ENCODE measurements at regions of chr11 and their contacts with region 1.

Region 1: DNA sequence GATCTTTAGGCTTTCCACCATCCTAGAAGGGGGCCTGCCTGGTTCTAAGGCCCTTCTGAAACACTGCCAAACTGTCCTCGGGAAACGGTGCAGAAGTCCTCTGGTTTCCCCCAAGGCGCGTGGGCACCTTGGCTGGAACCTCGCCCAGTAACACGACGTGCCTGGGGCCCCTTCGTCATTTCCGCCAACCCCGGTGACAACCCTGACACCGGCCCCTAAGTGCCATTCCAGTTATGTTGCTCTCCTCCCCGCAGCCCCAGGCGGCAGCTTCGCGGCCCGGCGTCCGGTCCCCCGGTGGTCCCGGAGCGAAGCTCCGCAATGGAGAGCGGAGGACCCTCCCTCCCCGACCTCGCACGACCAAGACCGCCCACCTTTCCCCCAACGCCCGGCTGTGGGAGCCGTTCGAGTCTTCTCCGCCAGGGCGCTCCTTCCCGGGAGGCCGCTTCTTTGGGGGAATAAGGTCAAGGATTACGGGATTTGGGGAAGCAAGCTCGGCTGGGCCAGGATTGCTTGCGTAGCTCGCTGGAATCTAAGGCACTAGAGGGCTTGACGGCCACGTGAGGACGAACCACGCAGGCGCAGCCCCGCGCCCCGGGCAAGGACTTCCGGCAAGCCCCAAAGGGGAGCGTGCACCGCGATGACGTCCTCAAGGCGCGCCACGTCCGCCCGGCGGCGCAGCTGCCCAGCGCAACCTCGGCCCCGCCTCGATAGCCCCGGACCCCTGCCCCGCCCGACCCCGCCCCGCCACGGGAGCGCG is 626 bp downstream of the RNH1 start:
- DNase-seq: peak; percentile 95 to 98 (median 97)
- ATAC-seq: peak; percentile 79
- H3K4me3 ChIP-seq: peak overlapping the region; percentile 99
- H3K4me3 Mint-ChIP-seq: peak overlapping the region; percentile 93 to 99 (median 96)
- H3K27ac ChIP-seq: peak overlapping the region; percentile 99
- H3K27ac Mint-ChIP-seq: peak overlapping the region; percentile 98 to 100 (median 99)
- H3K4me1 ChIP-seq: peaks cover 12 to 26% of the 10 kb centered on the region in 2 donors
- H3K4me1 Mint-ChIP-seq: peaks cover 5 to 34% (median 21%) of the 10 kb centered on the region in 7 donors
- H3K27me3 ChIP-seq: no peaks in the 10 kb centered on the region
- H3K27me3 Mint-ChIP-seq: no peaks in the 10 kb centered on the region

Region 2: GRCh38 chr11:199782-200181 is 306.6 kb before region 1 on chr11:
- CTCF ChIA-PET with region 1: no interaction called
- POLR2A ChIA-PET with region 1: no interaction called
- intact Hi-C with region 1: no loop called
- DNase-seq: peak in 2 of 9 donors; percentile 7 to 19
- ATAC-seq: no peak
- H3K4me3 ChIP-seq: no peak overlapping the region
- H3K4me3 Mint-ChIP-seq: no peak overlapping the region
- H3K27ac ChIP-seq: no peak overlapping the region
- H3K27ac Mint-ChIP-seq: peak overlapping the region in 1 of 9 donors; percentile 25
- H3K4me1 ChIP-seq: peaks cover 9 to 34% of the 10 kb centered on the region in 2 donors
- H3K4me1 Mint-ChIP-seq: peaks cover 26 to 42% (median 38%) of the 10 kb centered on the region in 7 donors
- H3K27me3 ChIP-seq: no peaks in the 10 kb centered on the region
- H3K27me3 Mint-ChIP-seq: no peaks in the 10 kb centered on the region

Region 3: GRCh38 chr11:236774-237767 is 269.3 kb before region 1 on chr11 and contains the start of gene PSMD13:
- CTCF ChIA-PET with region 1: no interaction called
- POLR2A ChIA-PET with region 1: interaction called, 3 read pairs
- intact Hi-C with region 1: loop called (anchors 1 kb)
- DNase-seq: peak; percentile 82 to 92 (median 88)
- ATAC-seq: peak; percentile 88
- H3K4me3 ChIP-seq: peak within 1 kb of the TSS; percentile 100
- H3K4me3 Mint-ChIP-seq: peak within 1 kb of the TSS; percentile 84 to 99 (median 96)
- H3K27ac ChIP-seq: peak within 1 kb of the TSS; percentile 97
- H3K27ac Mint-ChIP-seq: peak within 1 kb of the TSS; percentile 84 to 100 (median 100)
- H3K4me1 ChIP-seq: peaks cover 17 to 23% of the 10 kb centered on the region in 2 donors
- H3K4me1 Mint-ChIP-seq: peaks cover 26 to 66% (median 53%) of the 10 kb centered on the region in 7 donors
- H3K27me3 ChIP-seq: no peaks in the 10 kb centered on the region
- H3K27me3 Mint-ChIP-seq: no peaks in the 10 kb centered on the region
- total RNA-seq, gene PSMD13: 64.3 to 172 (median 86.9) TPM

Region 4: GRCh38 chr11:355581-356458 is 150.6 kb before region 1 on chr11:
- CTCF ChIA-PET with region 1: no interaction called
- POLR2A ChIA-PET with region 1: no interaction called
- intact Hi-C with region 1: loop called in 1 of 2 experiments (anchors 5 kb)
- DNase-seq: peak; percentile 74 to 92 (median 90)
- ATAC-seq: peak; percentile 89
- H3K4me3 ChIP-seq: peak overlapping the region; percentile 66
- H3K4me3 Mint-ChIP-seq: peak overlapping the region in 8 of 10 donors; percentile 83 to 93 (median 88)
- H3K27ac ChIP-seq: peak overlapping the region; percentile 97
- H3K27ac Mint-ChIP-seq: peak overlapping the region in 6 of 9 donors; percentile 89 to 99 (median 98)
- H3K4me1 ChIP-seq: peaks cover 9 to 19% of the 10 kb centered on the region in 2 donors
- H3K4me1 Mint-ChIP-seq: peaks cover 29 to 45% (median 37%) of the 10 kb centered on the region in 7 donors
- H3K27me3 ChIP-seq: no peaks in the 10 kb centered on the region
- H3K27me3 Mint-ChIP-seq: peaks cover 0 to 6% (median 0%) of the 10 kb centered on the region in 5 donors

Region 5: GRCh38 chr11:488999-489398 is 17.4 kb before region 1 on chr11:
- CTCF ChIA-PET with region 1: no interaction called
- POLR2A ChIA-PET with region 1: no interaction called
- intact Hi-C with region 1: no loop called
- DNase-seq: no peak
- ATAC-seq: no peak
- H3K4me3 ChIP-seq: no peak overlapping the region
- H3K4me3 Mint-ChIP-seq: no peak overlapping the region
- H3K27ac ChIP-seq: no peak overlapping the region
- H3K27ac Mint-ChIP-seq: no peak overlapping the region
- H3K4me1 ChIP-seq: no peaks in the 10 kb centered on the region
- H3K4me1 Mint-ChIP-seq: no peaks in the 10 kb centered on the region
- H3K27me3 ChIP-seq: no peaks in the 10 kb centered on the region
- H3K27me3 Mint-ChIP-seq: no peaks in the 10 kb centered on the region

Region 6: DNA sequence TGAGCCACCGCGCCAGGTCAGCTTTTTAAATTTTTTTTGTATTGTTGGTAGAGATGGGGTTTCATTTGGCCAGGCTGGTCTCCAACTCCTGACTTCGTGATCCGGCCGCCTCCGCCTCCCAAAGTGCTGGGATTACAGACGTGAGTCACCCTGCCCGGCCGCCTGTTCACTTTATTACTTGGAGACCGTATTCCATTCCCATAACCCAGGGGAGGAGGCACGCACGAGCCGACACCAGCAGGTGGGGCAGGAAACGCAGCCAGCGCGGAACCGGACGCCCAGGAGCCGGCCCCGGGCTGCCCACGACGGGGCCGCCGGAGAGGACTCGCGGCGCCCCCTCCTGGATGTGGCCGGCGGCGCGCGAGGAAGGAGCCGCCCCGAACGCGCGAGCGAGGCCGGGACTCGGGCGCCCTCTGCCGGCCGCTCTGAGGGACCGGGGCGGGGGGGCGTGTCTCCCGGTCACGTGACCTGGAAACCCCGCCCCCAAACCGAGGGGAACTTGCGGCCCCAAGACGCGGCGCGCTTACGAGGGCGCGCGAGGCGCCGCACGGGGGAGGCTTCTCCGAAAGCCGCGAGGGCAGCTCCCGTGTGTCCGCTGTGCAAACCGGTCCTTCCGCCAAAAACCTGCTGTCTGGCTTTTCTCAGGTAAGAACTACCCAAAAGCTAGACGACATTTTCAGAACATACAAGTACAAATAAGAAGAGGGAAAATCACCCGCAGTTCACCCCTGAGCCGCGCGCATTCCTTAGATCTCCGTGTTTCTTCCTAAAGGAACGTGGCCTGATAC is 12.2 kb after region 1 on chr11:
- CTCF ChIA-PET with region 1: interaction called, 7 read pairs
- POLR2A ChIA-PET with region 1: interaction called, 6 read pairs
- intact Hi-C with region 1: loop called (anchors 1 kb)
- DNase-seq: peak; percentile 69 to 94 (median 87)
- ATAC-seq: peak; percentile 99
- H3K4me3 ChIP-seq: peak overlapping the region; percentile 28
- H3K4me3 Mint-ChIP-seq: peak overlapping the region; percentile 81 to 91 (median 87)
- H3K27ac ChIP-seq: peak overlapping the region; percentile 58
- H3K27ac Mint-ChIP-seq: peak overlapping the region; percentile 70 to 92 (median 85)
- H3K4me1 ChIP-seq: peaks cover 4% of the 10 kb centered on the region in 2 donors
- H3K4me1 Mint-ChIP-seq: peaks cover 2 to 8% (median 4%) of the 10 kb centered on the region in 7 donors
- H3K27me3 ChIP-seq: no peaks in the 10 kb centered on the region
- H3K27me3 Mint-ChIP-seq: no peaks in the 10 kb centered on the region

Region 7: DNA sequence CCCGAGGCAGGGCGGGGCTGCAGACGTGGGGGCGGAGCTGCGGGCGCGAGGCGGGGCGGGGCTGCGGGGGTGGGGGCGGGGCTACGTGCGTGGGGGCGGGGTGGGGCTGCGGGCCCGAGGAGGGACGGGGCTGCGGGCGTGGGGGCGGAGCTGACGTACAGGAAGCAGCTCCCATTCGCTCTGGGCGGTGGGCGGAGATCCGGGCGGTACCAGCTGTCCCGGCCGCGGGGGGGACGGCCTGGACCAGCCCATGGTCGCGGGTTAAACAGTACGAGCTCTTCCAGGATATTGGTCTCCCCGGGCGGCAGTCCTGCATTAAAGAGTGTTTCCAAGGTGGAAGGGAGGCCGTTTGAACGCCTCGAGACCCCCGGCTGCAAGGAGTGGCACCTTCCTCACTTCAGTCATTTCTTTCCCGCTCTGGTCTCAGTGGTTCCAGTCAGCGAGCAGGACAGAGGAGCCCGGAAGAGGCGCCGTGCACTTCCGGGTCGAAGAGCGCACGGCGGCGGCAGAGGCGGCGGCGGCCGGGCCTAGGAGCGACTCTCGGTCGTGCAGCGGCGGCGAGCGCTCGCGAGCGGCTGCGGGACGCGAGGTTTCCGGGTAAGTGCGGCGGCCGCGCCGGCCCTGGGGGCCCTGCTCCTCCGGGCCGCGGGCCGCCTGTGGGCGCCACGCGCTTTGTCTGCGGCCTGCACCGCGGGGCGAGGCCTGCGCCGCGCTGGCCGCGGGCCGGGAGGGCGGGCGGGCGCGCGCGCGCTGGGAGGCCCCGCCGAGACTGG is 69.8 kb after region 1 on chr11 and contains the start of gene PHRF1:
- CTCF ChIA-PET with region 1: no interaction called
- POLR2A ChIA-PET with region 1: interaction called, 6 read pairs
- intact Hi-C with region 1: loop called (anchors 1 kb)
- DNase-seq: peak; percentile 93 to 99 (median 97)
- ATAC-seq: peak; percentile 93
- H3K4me3 ChIP-seq: peak within 1 kb of the TSS; percentile 98
- H3K4me3 Mint-ChIP-seq: peak within 1 kb of the TSS; percentile 93 to 99 (median 98)
- H3K27ac ChIP-seq: peak within 1 kb of the TSS; percentile 98
- H3K27ac Mint-ChIP-seq: peak within 1 kb of the TSS; percentile 96 to 100 (median 99)
- H3K4me1 ChIP-seq: peaks cover 26 to 44% of the 10 kb centered on the region in 2 donors
- H3K4me1 Mint-ChIP-seq: peaks cover 42 to 60% (median 46%) of the 10 kb centered on the region in 7 donors
- H3K27me3 ChIP-seq: no peaks in the 10 kb centered on the region
- H3K27me3 Mint-ChIP-seq: peaks cover 0 to 9% (median 0%) of the 10 kb centered on the region in 5 donors
- total RNA-seq, gene PHRF1: 47.3 to 55.2 (median 49.4) TPM

Region 8: DNA sequence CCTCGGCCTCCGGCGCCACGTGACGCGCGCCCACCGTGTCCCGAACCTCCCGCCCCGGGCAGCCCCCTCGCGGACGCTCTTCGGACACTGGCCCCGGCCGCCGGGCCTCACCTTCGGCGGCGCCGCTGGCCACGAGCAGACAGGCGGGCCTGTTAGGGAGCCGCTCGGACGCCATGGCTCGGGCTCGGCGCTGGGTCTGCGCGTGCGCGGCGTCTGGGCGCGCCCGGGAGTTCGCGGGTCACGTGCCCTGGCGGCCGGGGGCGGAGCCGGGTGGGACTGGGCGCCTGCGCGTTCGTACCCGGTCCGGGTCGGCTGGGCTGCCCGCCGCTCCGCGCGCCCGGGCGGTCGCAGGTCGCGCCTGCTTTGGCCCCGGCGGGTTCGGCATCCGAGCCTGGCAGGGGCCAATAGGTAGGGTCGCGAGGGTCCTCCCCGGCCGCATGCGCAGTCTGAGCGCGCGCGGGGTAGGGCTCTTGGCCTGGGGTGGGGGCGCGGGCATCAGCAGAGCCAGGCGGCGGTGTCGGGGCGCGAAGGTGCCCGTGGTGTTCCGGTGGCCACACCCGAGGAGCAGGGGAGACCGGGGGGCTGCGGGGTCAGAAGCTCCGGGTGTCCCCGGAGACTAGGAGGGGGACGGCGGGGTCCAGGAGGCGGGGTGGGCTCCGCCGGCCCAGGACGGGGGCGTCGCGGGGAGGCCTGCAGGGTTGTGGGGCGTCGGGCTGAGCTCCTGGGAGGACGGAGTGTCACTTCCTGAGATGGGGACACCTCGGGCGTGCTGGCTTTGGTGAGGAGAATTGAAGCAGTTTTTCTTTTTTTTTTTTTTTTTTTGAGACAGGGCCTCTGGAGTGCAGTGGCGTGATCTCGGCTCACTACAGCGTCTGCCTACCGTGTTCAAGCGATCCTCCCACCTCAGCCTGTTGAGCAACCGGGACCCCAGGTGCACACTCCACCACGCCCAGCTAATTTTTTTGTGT is 271.2 kb after region 1 on chr11 and contains the start of gene GATD1:
- CTCF ChIA-PET with region 1: no interaction called
- POLR2A ChIA-PET with region 1: no interaction called
- intact Hi-C with region 1: no loop called
- DNase-seq: peak; percentile 86 to 99 (median 93)
- ATAC-seq: peak; percentile 93
- H3K4me3 ChIP-seq: peak within 1 kb of the TSS; percentile 59
- H3K4me3 Mint-ChIP-seq: peak within 1 kb of the TSS; percentile 72 to 91 (median 83)
- H3K27ac ChIP-seq: peak within 1 kb of the TSS; percentile 85
- H3K27ac Mint-ChIP-seq: peak within 1 kb of the TSS; percentile 40 to 92 (median 78)
- H3K4me1 ChIP-seq: peaks cover 12 to 14% of the 10 kb centered on the region in 2 donors
- H3K4me1 Mint-ChIP-seq: peaks cover 7 to 29% (median 23%) of the 10 kb centered on the region in 7 donors
- H3K27me3 ChIP-seq: no peaks in the 10 kb centered on the region
- H3K27me3 Mint-ChIP-seq: no peaks in the 10 kb centered on the region
- total RNA-seq, gene GATD1: 37.8 to 59.2 (median 52.9) TPM

Region 9: DNA sequence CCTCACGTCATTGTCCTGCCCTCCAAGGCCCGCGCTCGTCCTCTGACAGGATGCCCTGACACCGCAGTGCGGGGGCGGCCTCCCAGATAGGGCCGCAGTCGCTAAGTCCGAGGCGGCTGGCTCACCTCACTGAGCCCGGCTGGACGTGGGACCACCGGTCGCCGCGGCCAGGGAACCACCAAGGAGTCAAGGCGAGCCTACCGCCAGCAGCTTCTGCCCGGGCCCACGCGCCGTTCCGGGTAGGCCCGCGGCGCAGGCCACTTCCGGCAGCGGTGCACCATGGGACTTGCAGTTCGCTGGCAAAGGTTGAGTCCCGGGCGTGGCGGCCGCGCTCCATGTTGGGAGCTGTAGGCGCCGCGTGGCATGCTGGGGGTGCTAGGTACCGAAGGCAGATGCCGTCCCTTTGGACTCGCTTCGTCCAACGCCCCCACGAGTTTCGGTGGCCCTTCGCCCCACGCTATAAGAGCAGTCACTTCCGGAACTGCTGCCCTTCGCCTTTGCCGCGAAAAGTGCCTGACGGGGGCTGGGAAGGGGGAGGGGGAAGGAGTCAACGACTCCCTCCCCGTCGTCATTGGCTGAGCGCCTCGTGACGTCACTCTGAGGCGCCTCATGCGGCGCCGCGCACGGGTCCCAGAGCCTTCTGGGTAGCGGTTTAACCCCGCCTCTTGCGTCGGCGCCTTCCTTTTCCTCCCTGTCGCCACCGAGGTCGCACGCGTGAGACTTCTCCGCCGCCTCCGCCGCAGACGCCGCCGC is 303.0 kb after region 1 on chr11 and contains the start of gene RPLP2:
- CTCF ChIA-PET with region 1: no interaction called
- POLR2A ChIA-PET with region 1: interaction called, 3 read pairs
- intact Hi-C with region 1: loop called in 1 of 2 experiments (anchors 1 kb)
- DNase-seq: peak; percentile 95 to 99 (median 98)
- ATAC-seq: peak; percentile 90
- H3K4me3 ChIP-seq: peak within 1 kb of the TSS; percentile 96
- H3K4me3 Mint-ChIP-seq: peak within 1 kb of the TSS; percentile 88 to 96 (median 95)
- H3K27ac ChIP-seq: peak within 1 kb of the TSS; percentile 96
- H3K27ac Mint-ChIP-seq: peak within 1 kb of the TSS; percentile 91 to 99 (median 97)
- H3K4me1 ChIP-seq: peaks cover 24 to 26% of the 10 kb centered on the region in 2 donors
- H3K4me1 Mint-ChIP-seq: peaks cover 8 to 51% (median 32%) of the 10 kb centered on the region in 7 donors
- H3K27me3 ChIP-seq: no peaks in the 10 kb centered on the region
- H3K27me3 Mint-ChIP-seq: no peaks in the 10 kb centered on the region
- total RNA-seq, gene RPLP2: 2,266 to 5,944 (median 5,497) TPM

Measured in naive thymus-derived CD4-positive, alpha-beta T cell (primary cell).